A549 (cell line): ENCODE measurements at regions of chr1 and their contacts with region 1.

Region 1: GRCh38 chr1:26811057-26811456 is 15.4 kb upstream of the ZDHHC18 start:
- DNase-seq: no peak
- ATAC-seq: no peak
- H3K4me3 ChIP-seq: no peak overlapping the region
- H3K27ac ChIP-seq: no peak overlapping the region; a peak in 1 of 6 replicates
- H3K4me1 ChIP-seq: no peaks in the 10 kb centered on the region; the same call in 2 of the 3 replicates
- CTCF ChIP-seq: no peak
- EP300 ChIP-seq: no peak
- POLR2A ChIP-seq: no peak
- RAD21 ChIP-seq: no peak

Region 2: DNA sequence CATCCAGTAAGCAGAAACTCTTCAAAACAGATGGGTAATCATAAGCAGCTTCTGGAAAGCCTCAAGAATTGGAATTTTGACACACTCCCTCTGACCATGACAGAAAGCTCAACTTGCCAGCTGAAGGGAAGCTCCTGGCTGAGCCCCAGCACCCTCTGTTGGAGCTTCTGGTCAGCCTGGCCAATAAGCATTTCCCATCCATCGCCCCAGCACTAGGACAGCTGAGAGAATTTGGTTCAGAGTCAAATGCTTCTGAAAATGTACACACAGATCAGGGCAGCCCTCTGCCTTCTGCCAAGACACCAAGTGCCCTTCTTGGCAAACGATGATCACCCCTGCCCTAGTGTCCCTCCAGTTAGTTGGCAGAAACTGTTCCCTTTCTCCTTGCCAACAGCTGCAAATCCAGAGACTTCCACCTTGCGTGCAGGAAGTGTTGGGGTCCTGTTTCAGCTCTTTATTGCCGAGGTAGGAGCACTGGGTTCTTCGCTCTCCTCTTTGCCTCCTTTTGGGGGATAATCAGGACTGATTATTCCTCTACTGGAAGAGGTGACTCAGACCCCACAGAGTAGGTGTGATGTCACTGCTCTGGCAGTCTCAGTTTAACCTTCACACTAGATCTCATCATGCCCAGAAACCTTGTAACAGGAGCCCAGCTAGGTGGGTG is 11.4 kb before region 1 on chr1:
- CTCF ChIA-PET with region 1: interaction called, 11 read pairs
- POLR2A ChIA-PET with region 1: no interaction called
- DNase-seq: no peak
- ATAC-seq: peak; percentile 73 to 76
- H3K4me3 ChIP-seq: no peak overlapping the region
- H3K27ac ChIP-seq: peak overlapping the region; percentile 40 to 57; a peak in 5 of 6 replicates
- H3K4me1 ChIP-seq: peaks cover 14% of the 10 kb centered on the region
- CTCF ChIP-seq: no peak
- EP300 ChIP-seq: no peak
- POLR2A ChIP-seq: no peak
- RAD21 ChIP-seq: no peak

Region 3: GRCh38 chr1:26856604-26857469 is 45.8 kb after region 1 on chr1:
- CTCF ChIA-PET with region 1: interaction called, 13 read pairs
- POLR2A ChIA-PET with region 1: no interaction called
- DNase-seq: no peak
- ATAC-seq: no peak
- H3K4me3 ChIP-seq: no peak overlapping the region
- H3K27ac ChIP-seq: no peak overlapping the region; a peak in 1 of 6 replicates
- H3K4me1 ChIP-seq: peaks cover 20% of the 10 kb centered on the region
- CTCF ChIP-seq: no peak
- EP300 ChIP-seq: no peak
- POLR2A ChIP-seq: no peak
- RAD21 ChIP-seq: no peak

Region 4: GRCh38 chr1:26864610-26865527 is 53.8 kb after region 1 on chr1:
- CTCF ChIA-PET with region 1: interaction called, 17 read pairs
- POLR2A ChIA-PET with region 1: no interaction called
- DNase-seq: peak; percentile 65 to 96
- ATAC-seq: peak; percentile 76 to 89
- H3K4me3 ChIP-seq: peak overlapping the region; percentile 66
- H3K27ac ChIP-seq: peak overlapping the region; percentile 99 to 100
- H3K4me1 ChIP-seq: peaks cover 30% of the 10 kb centered on the region
- CTCF ChIP-seq: no peak
- EP300 ChIP-seq: no peak
- POLR2A ChIP-seq: peak; percentile 98
- RAD21 ChIP-seq: no peak

Region 5: DNA sequence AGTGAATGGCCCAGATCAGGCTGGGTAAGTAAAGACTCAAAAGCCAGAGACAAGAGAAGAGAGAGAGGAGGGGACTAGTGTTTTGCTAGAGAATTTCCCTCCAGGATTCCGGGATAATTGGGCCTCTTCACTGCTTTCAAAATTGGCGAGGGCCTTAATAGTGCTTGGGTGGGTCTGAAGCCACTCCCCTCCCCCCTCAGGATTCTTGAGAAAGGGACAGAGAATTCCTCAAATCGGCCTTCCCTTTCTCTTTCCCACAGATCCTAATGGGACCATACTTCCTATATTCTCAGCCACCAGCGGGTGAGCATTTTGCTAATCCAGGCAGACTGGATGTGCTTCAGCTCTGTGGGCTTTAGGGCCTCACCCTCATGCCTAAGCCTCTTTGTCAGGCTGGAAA is 63.8 kb after region 1 on chr1:
- CTCF ChIA-PET with region 1: interaction called, 69 read pairs
- POLR2A ChIA-PET with region 1: no interaction called
- DNase-seq: no peak
- ATAC-seq: no peak
- H3K4me3 ChIP-seq: no peak overlapping the region
- H3K27ac ChIP-seq: no peak overlapping the region
- H3K4me1 ChIP-seq: no peaks in the 10 kb centered on the region
- CTCF ChIP-seq: no peak
- EP300 ChIP-seq: no peak
- POLR2A ChIP-seq: no peak
- RAD21 ChIP-seq: no peak